ENCODE measurements at regions of chrX and their contacts with region 1.

Region 1: DNA sequence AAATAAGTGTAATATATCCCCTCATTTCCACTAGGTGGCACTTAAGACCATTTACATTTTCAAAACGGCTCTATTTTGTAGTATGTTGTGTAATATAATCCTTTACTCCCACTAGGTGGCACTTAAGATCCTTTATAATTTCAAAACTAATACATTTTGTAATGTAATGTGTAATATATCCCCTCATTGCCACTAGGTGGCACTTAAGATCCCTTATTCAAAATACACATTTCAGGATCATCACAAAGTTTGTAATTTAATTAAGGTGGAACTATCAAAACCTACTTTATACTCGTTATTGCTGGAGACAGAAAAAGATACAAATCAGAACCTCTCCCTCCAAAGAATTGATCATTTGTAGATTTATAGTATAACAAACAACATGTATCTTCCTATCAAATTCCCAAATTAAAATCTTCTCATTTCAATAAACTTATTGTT is 132.5 kb downstream of the ARHGAP6 start:
- DNase-seq: peak; percentile 78
- H3K4me3 Mint-ChIP-seq: no peak overlapping the region
- H3K27ac Mint-ChIP-seq: no peak overlapping the region
- H3K4me1 Mint-ChIP-seq: no peaks in the 10 kb centered on the region
- H3K27me3 Mint-ChIP-seq: peaks cover 20% of the 10 kb centered on the region
- CTCF ChIP-seq: peak; percentile 82

Region 2: GRCh38 chrX:11461201-11462001 is 71.8 kb before region 1 on chrX:
- CTCF ChIA-PET with region 1: interaction called, 13 read pairs
- POLR2A ChIA-PET with region 1: no interaction called
- intact Hi-C with region 1: loop called (anchors 1 kb)
- DNase-seq: no peak
- H3K4me3 Mint-ChIP-seq: no peak overlapping the region
- H3K27ac Mint-ChIP-seq: no peak overlapping the region
- H3K4me1 Mint-ChIP-seq: peaks cover 17% of the 10 kb centered on the region
- H3K27me3 Mint-ChIP-seq: peaks cover 33% of the 10 kb centered on the region
- CTCF ChIP-seq: no peak

Region 3: GRCh38 chrX:11724122-11725017 is 191.1 kb after region 1 on chrX:
- CTCF ChIA-PET with region 1: interaction called, 47 read pairs
- POLR2A ChIA-PET with region 1: no interaction called
- intact Hi-C with region 1: loop called (anchors 1 kb)
- DNase-seq: peak; percentile 58
- H3K4me3 Mint-ChIP-seq: no peak overlapping the region
- H3K27ac Mint-ChIP-seq: no peak overlapping the region
- H3K4me1 Mint-ChIP-seq: no peaks in the 10 kb centered on the region
- H3K27me3 Mint-ChIP-seq: peaks cover 44% of the 10 kb centered on the region
- CTCF ChIP-seq: peak; percentile 52

Region 4: GRCh38 chrX:11764602-11765067 is 231.4 kb after region 1 on chrX:
- CTCF ChIA-PET with region 1: interaction called, 30 read pairs
- POLR2A ChIA-PET with region 1: no interaction called
- intact Hi-C with region 1: no loop called
- DNase-seq: no peak
- H3K4me3 Mint-ChIP-seq: no peak overlapping the region
- H3K27ac Mint-ChIP-seq: no peak overlapping the region
- H3K4me1 Mint-ChIP-seq: peaks cover 5% of the 10 kb centered on the region
- H3K27me3 Mint-ChIP-seq: peaks cover 18% of the 10 kb centered on the region
- CTCF ChIP-seq: no peak

Region 5: GRCh38 chrX:11770320-11770719 is 237.1 kb after region 1 on chrX:
- CTCF ChIA-PET with region 1: interaction called, 30 read pairs
- POLR2A ChIA-PET with region 1: no interaction called
- intact Hi-C with region 1: loop called (anchors 1 kb)
- DNase-seq: peak; percentile 72
- H3K4me3 Mint-ChIP-seq: no peak overlapping the region
- H3K27ac Mint-ChIP-seq: no peak overlapping the region
- H3K4me1 Mint-ChIP-seq: peaks cover 6% of the 10 kb centered on the region
- H3K27me3 Mint-ChIP-seq: peaks cover 11% of the 10 kb centered on the region
- CTCF ChIP-seq: peak; percentile 74

Region 6: GRCh38 chrX:11908371-11908770 is 375.1 kb after region 1 on chrX:
- CTCF ChIA-PET with region 1: interaction called, 3 read pairs
- POLR2A ChIA-PET with region 1: no interaction called
- intact Hi-C with region 1: loop called (anchors 1 kb)
- DNase-seq: peak; percentile 59
- H3K4me3 Mint-ChIP-seq: no peak overlapping the region
- H3K27ac Mint-ChIP-seq: no peak overlapping the region
- H3K4me1 Mint-ChIP-seq: no peaks in the 10 kb centered on the region
- H3K27me3 Mint-ChIP-seq: peaks cover 37% of the 10 kb centered on the region
- CTCF ChIP-seq: peak; percentile 42

Region 7: GRCh38 chrX:12002876-12003275 is 469.6 kb after region 1 on chrX:
- CTCF ChIA-PET with region 1: no interaction called
- POLR2A ChIA-PET with region 1: no interaction called
- intact Hi-C with region 1: no loop called
- DNase-seq: no peak
- H3K4me3 Mint-ChIP-seq: no peak overlapping the region
- H3K27ac Mint-ChIP-seq: no peak overlapping the region
- H3K4me1 Mint-ChIP-seq: peaks cover 4% of the 10 kb centered on the region
- H3K27me3 Mint-ChIP-seq: no peaks in the 10 kb centered on the region
- CTCF ChIP-seq: no peak

Measured in MCF 10A (cell line).